ENCODE measurements at regions of chr1 and their contacts with region 1.

Region 1: DNA sequence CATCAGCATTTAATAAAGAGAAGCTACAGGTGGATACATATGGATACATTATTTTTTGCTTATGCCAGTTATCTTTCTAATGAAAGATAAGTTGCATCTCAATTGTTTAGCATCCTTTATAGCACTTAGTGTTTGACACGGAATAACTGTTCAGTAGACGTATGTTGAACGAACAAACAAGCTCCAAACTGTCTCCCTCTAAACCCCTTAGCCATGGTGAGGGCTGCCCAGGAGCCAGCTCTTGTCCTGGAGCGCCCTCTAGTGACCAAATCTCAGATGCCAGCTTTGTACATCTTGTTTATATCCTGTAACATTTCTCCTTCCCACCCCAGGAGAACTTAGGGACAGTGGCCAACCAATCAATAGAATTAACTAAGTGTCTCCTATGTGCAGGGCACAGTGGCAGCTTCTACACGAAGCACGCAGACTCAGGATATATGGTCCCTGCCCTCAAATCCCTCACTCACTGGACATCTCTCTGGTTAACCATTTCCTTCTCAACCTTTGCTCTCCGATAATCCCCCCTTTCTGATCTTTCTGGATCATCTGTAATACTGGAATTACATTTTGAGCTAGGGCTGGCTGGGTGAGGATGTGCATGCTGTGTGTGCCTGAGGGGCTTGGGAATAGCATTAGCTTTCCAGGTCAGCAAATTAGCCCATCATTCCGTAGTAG is 22.9 kb downstream of the KCNA10 start:
- DNase-seq: peak; percentile 88
- ATAC-seq: peak; percentile 79
- H3K4me3 Mint-ChIP-seq: no peak overlapping the region
- H3K27ac Mint-ChIP-seq: no peak overlapping the region
- H3K4me1 Mint-ChIP-seq: peaks cover 23% of the 10 kb centered on the region
- H3K27me3 Mint-ChIP-seq: peaks cover 2% of the 10 kb centered on the region; the same call in 1 of the 2 replicates
- CTCF ChIP-seq: peak; percentile 84

Region 2: DNA sequence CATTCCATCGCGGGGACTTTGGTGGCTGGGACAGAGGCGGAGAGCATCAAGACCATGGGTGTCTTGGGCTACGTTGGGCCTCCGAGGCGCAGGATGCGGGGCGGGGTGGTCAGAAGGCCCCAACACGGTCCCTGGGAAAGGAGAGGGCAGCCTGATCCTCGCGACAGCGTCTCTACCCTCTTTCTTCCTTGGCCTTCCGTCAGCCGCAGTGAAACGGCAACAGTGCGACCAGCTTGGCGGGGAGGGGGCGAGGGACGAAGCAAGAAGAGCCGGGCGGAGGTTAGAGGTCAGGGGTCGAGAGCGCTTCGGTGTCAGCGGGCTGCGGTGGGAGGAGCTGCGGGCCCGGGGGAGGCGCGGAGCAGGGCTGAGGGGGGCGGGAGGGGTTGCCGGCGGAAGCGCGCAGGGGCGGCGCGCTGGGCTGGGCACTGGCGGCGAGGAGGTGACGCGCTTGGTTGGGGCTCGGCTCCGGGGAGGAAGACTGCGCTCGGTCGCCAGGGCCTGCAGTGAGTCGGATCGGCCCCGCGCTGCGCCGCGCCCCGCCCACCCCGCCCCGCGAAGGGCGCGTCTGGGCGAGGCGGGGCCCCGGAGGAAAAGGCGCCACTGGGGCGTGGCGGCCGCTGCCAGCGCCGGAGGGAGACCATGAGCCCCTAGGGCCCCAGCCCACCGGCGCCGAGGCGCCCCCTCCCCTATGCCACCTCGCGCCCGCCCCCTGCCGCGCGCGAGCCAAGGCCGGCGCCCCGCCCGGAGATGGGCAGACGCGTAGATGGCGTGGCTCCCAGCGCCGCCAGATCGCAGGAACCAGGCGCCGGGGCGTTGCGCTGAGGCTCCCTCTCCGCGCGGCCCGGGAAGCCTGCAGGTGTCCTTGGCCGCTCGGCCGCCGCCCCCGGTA is 286.1 kb before region 1 on chr1 and contains the start of gene KCNC4:
- CTCF ChIA-PET with region 1: interaction called, 96 read pairs
- POLR2A ChIA-PET with region 1: interaction called, 4 read pairs
- DNase-seq: peak; percentile 87
- ATAC-seq: peak; percentile 75
- H3K4me3 Mint-ChIP-seq: peak within 1 kb of the TSS; percentile 82
- H3K27ac Mint-ChIP-seq: peak within 1 kb of the TSS; percentile 92
- H3K4me1 Mint-ChIP-seq: peaks cover 33% of the 10 kb centered on the region
- H3K27me3 Mint-ChIP-seq: peaks cover 22% of the 10 kb centered on the region
- CTCF ChIP-seq: no peak
- total RNA-seq, gene KCNC4: 19.9 to 21.9 TPM (median 21.9 TPM) in 3 replicates

Region 3: GRCh38 chr1:110412576-110412975 is 83.5 kb before region 1 on chr1:
- CTCF ChIA-PET with region 1: interaction called, 106 read pairs
- POLR2A ChIA-PET with region 1: no interaction called
- DNase-seq: peak; percentile 82
- ATAC-seq: peak; percentile 78
- H3K4me3 Mint-ChIP-seq: no peak overlapping the region
- H3K27ac Mint-ChIP-seq: no peak overlapping the region
- H3K4me1 Mint-ChIP-seq: peaks cover 23% of the 10 kb centered on the region
- H3K27me3 Mint-ChIP-seq: peaks cover 2% of the 10 kb centered on the region; the same call in 1 of the 2 replicates
- CTCF ChIP-seq: peak; percentile 55; the same call in 1 of the 2 replicates

Region 4: DNA sequence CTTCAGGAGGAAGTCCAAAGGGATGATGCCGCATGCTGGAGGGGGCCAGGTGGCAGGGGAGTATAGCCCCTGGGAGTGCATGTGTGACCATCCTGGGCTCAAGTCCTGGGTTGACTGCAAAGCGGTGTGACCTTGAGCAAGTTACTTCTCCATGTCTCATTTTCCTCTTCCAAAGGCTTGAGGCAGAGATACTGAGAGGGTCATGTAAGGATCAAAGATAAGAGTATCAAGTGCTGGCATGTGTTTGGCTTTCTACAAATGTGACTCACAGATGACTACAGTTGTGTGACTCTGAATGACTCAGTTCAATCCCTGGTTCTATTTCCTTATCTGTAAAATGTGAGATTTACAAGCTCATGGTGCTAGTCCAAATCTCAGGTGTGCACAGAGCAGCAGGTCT is 19.0 kb before region 1 on chr1:
- CTCF ChIA-PET with region 1: interaction called, 83 read pairs
- POLR2A ChIA-PET with region 1: interaction called, 5 read pairs
- DNase-seq: no peak
- ATAC-seq: no peak
- H3K4me3 Mint-ChIP-seq: no peak overlapping the region
- H3K27ac Mint-ChIP-seq: no peak overlapping the region
- H3K4me1 Mint-ChIP-seq: peaks cover 24% of the 10 kb centered on the region
- H3K27me3 Mint-ChIP-seq: no peaks in the 10 kb centered on the region; the same call in 1 of the 2 replicates
- CTCF ChIP-seq: no peak

Region 5: DNA sequence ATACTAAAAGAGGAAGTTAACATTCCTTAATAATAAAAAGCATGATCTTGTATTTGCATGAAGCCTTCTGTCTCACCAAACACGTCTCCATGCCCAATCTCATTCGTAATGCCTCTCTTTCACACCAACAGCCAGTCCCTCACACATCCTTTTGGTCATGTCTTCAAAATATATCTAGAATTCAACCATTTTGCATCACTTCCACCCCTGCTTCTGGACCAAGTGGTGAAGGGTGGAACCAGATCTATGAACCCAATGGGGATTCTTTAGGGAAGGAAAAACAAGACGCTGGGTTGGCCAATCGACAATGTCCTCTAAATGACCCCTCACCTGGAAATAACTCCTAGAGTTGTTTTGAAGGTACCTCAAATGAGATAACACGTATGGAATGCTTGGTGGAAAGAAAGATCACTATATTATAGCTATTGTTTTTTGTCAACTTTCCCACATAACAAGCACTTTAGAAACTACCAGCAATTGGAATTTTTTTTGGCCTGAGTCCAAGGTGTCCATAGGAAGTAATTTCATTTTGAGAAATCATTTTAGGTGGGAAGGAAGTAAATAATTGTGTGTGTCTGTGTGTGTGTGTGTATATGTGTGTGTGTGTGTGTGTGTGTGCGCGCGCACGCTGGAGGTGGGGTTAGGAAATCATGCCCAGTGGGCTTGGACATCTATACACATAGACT is 23.2 kb after region 1 on chr1 and contains the start of gene KCNA10:
- CTCF ChIA-PET with region 1: interaction called, 25 read pairs
- POLR2A ChIA-PET with region 1: no interaction called
- DNase-seq: no peak
- ATAC-seq: no peak
- H3K4me3 Mint-ChIP-seq: no peak within 1 kb of the TSS
- H3K27ac Mint-ChIP-seq: no peak within 1 kb of the TSS
- H3K4me1 Mint-ChIP-seq: peaks cover 16% of the 10 kb centered on the region
- H3K27me3 Mint-ChIP-seq: peaks cover 3% of the 10 kb centered on the region
- CTCF ChIP-seq: no peak
- total RNA-seq, gene KCNA10: not detected in 3 replicates

Region 6: GRCh38 chr1:110619412-110620249 is 123.6 kb after region 1 on chr1:
- CTCF ChIA-PET with region 1: interaction called, 16 read pairs
- POLR2A ChIA-PET with region 1: no interaction called
- DNase-seq: peak; percentile 89
- ATAC-seq: peak; percentile 85
- H3K4me3 Mint-ChIP-seq: peak overlapping the region; percentile 59
- H3K27ac Mint-ChIP-seq: no peak overlapping the region
- H3K4me1 Mint-ChIP-seq: peaks cover 6% of the 10 kb centered on the region; the same call in 1 of the 2 replicates
- H3K27me3 Mint-ChIP-seq: peaks cover 39% of the 10 kb centered on the region
- CTCF ChIP-seq: peak; percentile 97